Activated T-helper 1 cell treated with anti-CD3 and anti-CD28 coated beads, Interleukin-12 subunit alpha, Interleukin-12 subunit beta, Interleukin-2, Interleukin-4 antibody, amounts not matched to agents 30 ng/mL and 10 ng/mL and 1 ng/mL, durations not matched to agents 14 hours and 24 hours and 36 hours (primary cell): ENCODE measurements at regions of chr2 and their contacts with region 1.

Region 1: GRCh38 chr2:74391580-74392448 is 11.7 kb upstream of the DCTN1 start:
- DNase-seq: peak; percentile 88
- H3K4me3 Mint-ChIP-seq: peak overlapping the region; percentile 43
- H3K27ac Mint-ChIP-seq: peak overlapping the region; percentile 98
- H3K4me1 Mint-ChIP-seq: no peaks in the 10 kb centered on the region
- H3K27me3 Mint-ChIP-seq: peaks cover 10% of the 10 kb centered on the region

Region 2: GRCh38 chr2:73385595-73386341 is 1006.0 kb before region 1 on chr2 and contains the start of gene ALMS1:
- intact Hi-C with region 1: loop called (anchors 10 kb)
- DNase-seq: peak; percentile 88
- H3K4me3 Mint-ChIP-seq: peak within 1 kb of the TSS; percentile 92
- H3K27ac Mint-ChIP-seq: peak within 1 kb of the TSS; percentile 90
- H3K4me1 Mint-ChIP-seq: peaks cover 37% of the 10 kb centered on the region
- H3K27me3 Mint-ChIP-seq: no peaks in the 10 kb centered on the region
- total RNA-seq, gene ALMS1: 18.2 and 19.4 TPM in 2 replicates

Region 3: DNA sequence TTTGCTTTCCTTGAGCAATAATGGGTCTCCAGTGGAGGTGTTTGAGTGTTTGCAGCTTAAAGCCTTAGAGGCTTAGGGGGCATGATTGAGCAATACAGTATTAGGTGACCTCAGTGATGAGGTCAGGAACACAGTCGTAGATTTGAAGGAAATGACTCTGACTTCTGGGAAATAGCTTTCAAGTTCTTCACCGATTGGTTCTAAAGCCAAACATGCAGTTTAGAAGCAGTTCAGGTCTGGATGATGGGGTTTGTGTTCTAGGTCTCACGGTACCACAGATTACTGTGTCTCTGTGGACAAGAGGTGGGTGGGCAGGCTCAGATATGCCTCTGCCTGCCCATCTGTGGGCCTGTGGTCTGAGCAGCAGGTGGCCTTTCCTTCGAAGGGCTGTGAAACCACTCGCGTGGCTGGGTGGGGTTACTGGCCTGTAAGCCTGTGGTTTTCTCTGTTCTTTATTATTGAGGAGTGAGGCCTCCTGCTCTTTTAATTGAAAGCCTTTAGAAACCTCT is 185.6 kb before region 1 on chr2:
- intact Hi-C with region 1: loop called (anchors 5 kb)
- DNase-seq: peak; percentile 52
- H3K4me3 Mint-ChIP-seq: peak overlapping the region; percentile 78
- H3K27ac Mint-ChIP-seq: peak overlapping the region; percentile 96
- H3K4me1 Mint-ChIP-seq: peaks cover 72% of the 10 kb centered on the region
- H3K27me3 Mint-ChIP-seq: no peaks in the 10 kb centered on the region

Region 4: GRCh38 chr2:74267068-74267467 is 124.7 kb before region 1 on chr2:
- intact Hi-C with region 1: loop called (anchors 5 kb)
- DNase-seq: peak; percentile 43
- H3K4me3 Mint-ChIP-seq: no peak overlapping the region
- H3K27ac Mint-ChIP-seq: peak overlapping the region; percentile 23
- H3K4me1 Mint-ChIP-seq: peaks cover 13% of the 10 kb centered on the region
- H3K27me3 Mint-ChIP-seq: peaks cover 2% of the 10 kb centered on the region

Region 5: DNA sequence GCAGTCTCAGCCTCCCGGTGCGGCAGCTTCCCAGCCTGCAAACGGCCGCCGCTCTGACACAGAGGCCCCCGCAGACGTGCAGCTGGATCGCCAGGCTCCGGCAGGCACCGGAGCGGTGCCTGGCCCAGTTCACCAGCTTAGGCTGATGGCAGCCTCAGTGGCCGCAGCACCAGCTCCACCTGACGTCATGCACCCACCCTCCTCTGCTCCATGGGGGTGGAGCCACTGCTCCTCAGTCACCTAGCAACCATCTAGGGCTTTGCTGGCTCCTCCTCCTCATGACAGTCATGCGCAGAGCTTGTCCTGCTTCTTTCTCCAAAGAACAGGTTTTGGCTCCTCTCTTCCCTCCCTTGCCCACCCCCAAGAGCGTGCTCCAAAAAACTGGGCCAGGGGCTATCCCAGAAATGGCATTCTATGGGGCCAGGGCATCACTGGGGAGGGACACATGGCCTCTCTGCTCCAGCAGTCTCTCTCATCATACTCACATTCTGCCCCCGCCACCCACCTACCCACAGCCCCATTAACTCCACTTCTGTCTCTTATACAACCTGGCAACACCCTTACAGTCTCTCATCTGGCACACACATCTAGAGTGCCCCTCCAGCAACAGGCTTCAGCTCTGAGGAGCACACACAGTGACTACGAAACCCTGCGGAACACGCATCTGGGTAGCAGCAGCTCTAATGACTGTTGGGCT is 17.2 kb before region 1 on chr2:
- intact Hi-C with region 1: no loop called
- DNase-seq: no peak
- H3K4me3 Mint-ChIP-seq: no peak overlapping the region
- H3K27ac Mint-ChIP-seq: no peak overlapping the region
- H3K4me1 Mint-ChIP-seq: peaks cover 6% of the 10 kb centered on the region
- H3K27me3 Mint-ChIP-seq: no peaks in the 10 kb centered on the region

Region 6: GRCh38 chr2:74421221-74421870 is 29.5 kb after region 1 on chr2 and contains the starts of genes C2orf81 and WDR54:
- intact Hi-C with region 1: loop called (anchors 1 kb)
- DNase-seq: peak; percentile 95
- H3K4me3 Mint-ChIP-seq: peak within 1 kb of the TSS; percentile 98
- H3K27ac Mint-ChIP-seq: peak within 1 kb of the TSS; percentile 99
- H3K4me1 Mint-ChIP-seq: peaks cover 35% of the 10 kb centered on the region
- H3K27me3 Mint-ChIP-seq: no peaks in the 10 kb centered on the region
- total RNA-seq, gene C2orf81: 1.9 and 2.4 TPM in 2 replicates
- total RNA-seq, gene WDR54: 56.4 and 58.6 TPM in 2 replicates